Panc1 (cell line): ENCODE measurements at regions of chr1 and their contacts with region 1.

Region 1: DNA sequence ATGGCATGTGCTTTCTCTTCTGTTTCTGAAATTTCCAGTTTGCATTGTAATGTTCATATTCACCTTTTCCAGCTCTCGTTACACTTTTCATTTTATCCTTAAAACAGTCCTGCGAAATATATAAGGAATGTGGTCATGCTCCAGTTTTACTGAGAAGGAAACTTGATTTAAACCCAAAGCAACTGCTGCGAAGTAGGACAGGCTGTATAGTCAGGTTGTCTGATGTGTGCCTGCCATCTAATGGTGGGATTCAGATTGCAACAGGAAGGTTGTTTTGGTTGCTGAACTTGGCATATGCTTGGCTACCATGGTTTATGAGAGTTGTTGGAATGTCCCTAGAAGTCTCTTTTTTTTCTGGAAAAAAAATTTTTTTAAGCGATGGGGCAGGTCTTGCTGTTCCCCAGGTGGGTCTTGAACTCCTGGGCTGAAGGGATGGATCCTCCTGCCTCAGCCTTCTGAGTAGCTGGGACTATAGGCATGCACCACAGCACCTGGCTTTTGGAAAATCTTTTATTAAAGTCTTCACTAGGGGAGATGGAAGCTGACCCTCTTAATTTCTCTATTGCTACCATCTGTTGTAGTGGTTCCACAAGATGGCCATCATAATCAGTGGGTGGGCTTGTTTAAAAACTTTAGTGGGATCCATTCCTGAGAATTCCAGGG is 86.9 kb downstream of the UCK2 start:
- DNase-seq: peak; percentile 67
- ATAC-seq: peak; percentile 84
- H3K4me3 ChIP-seq: no peak overlapping the region
- H3K27ac ChIP-seq: no peak overlapping the region
- H3K4me1 ChIP-seq: no peaks in the 10 kb centered on the region
- H3K27me3 ChIP-seq: no peaks in the 10 kb centered on the region
- CTCF ChIP-seq: peak; percentile 84

Region 2: GRCh38 chr1:165600793-165601192 is 313.5 kb before region 1 on chr1:
- CTCF ChIA-PET with region 1: interaction called, 7 read pairs
- POLR2A ChIA-PET with region 1: no interaction called
- in situ Hi-C with region 1: no loop called
- intact Hi-C with region 1: loop called (anchors 2 kb)
- DNase-seq: no peak
- ATAC-seq: no peak
- H3K4me3 ChIP-seq: no peak overlapping the region
- H3K27ac ChIP-seq: no peak overlapping the region
- H3K4me1 ChIP-seq: 0 out of 2 replicates have a peak, but pooled peaks cover 2% of the 10 kb centered on the region
- H3K27me3 ChIP-seq: no peaks in the 10 kb centered on the region
- CTCF ChIP-seq: no peak

Region 3: GRCh38 chr1:165717918-165718515 is 196.2 kb before region 1 on chr1:
- CTCF ChIA-PET with region 1: no interaction called
- POLR2A ChIA-PET with region 1: no interaction called
- in situ Hi-C with region 1: no loop called
- intact Hi-C with region 1: loop called (anchors 1 kb)
- DNase-seq: peak; percentile 58
- ATAC-seq: peak; percentile 91
- H3K4me3 ChIP-seq: no peak overlapping the region
- H3K27ac ChIP-seq: no peak overlapping the region
- H3K4me1 ChIP-seq: no peaks in the 10 kb centered on the region
- H3K27me3 ChIP-seq: no peaks in the 10 kb centered on the region
- CTCF ChIP-seq: peak; percentile 86